GM23248 (cell line): ENCODE measurements at regions of chr19 and their contacts with region 1.

Region 1: GRCh38 chr19:17380431-17381138 is 3.4 kb upstream of the PLVAP start:
- DNase-seq: no peak
- H3K4me3 ChIP-seq: no peak overlapping the region
- H3K27ac ChIP-seq: no peak overlapping the region
- H3K4me1 ChIP-seq: peaks cover 5% of the 10 kb centered on the region; the same call in 1 of the 2 replicates
- H3K27me3 ChIP-seq: 0 out of 2 replicates have a peak, but pooled peaks cover 8% of the 10 kb centered on the region

Region 2: GRCh38 chr19:17346109-17346671 is 34.4 kb before region 1 on chr19:
- in situ Hi-C with region 1: loop called (anchors 5 kb)
- DNase-seq: peak; percentile 69
- H3K4me3 ChIP-seq: no peak overlapping the region
- H3K27ac ChIP-seq: no peak overlapping the region
- H3K4me1 ChIP-seq: no peaks in the 10 kb centered on the region
- H3K27me3 ChIP-seq: no peaks in the 10 kb centered on the region; the same call in 1 of the 2 replicates